ENCODE measurements at regions of chr3 and their contacts with region 1.

Region 1: GRCh38 chr3:154120961-154121700 is at the start of gene ARHGEF26:
- DNase-seq: peak; percentile 92 to 93
- H3K4me3 ChIP-seq: peak within 1 kb of the TSS; percentile 78
- H3K4me3 Mint-ChIP-seq: peak within 1 kb of the TSS; percentile 74
- H3K27ac Mint-ChIP-seq: peak within 1 kb of the TSS; percentile 95
- H3K4me1 ChIP-seq: peaks cover 24% of the 10 kb centered on the region
- H3K4me1 Mint-ChIP-seq: peaks cover 22% of the 10 kb centered on the region
- H3K27me3 ChIP-seq: no peaks in the 10 kb centered on the region
- H3K27me3 Mint-ChIP-seq: no peaks in the 10 kb centered on the region
- CTCF ChIP-seq: no peak
- total RNA-seq, gene ARHGEF26: 19.3 and 20.8 TPM in 2 replicates

Region 2: GRCh38 chr3:153599685-153600084 is 521.4 kb before region 1 on chr3:
- CTCF ChIA-PET with region 1: no interaction called
- POLR2A ChIA-PET with region 1: no interaction called
- intact Hi-C with region 1: no loop called
- DNase-seq: no peak
- H3K4me3 ChIP-seq: no peak overlapping the region
- H3K4me3 Mint-ChIP-seq: no peak overlapping the region
- H3K27ac Mint-ChIP-seq: no peak overlapping the region
- H3K4me1 ChIP-seq: no peaks in the 10 kb centered on the region
- H3K4me1 Mint-ChIP-seq: no peaks in the 10 kb centered on the region
- H3K27me3 ChIP-seq: no peaks in the 10 kb centered on the region
- H3K27me3 Mint-ChIP-seq: no peaks in the 10 kb centered on the region
- CTCF ChIP-seq: no peak

Region 3: DNA sequence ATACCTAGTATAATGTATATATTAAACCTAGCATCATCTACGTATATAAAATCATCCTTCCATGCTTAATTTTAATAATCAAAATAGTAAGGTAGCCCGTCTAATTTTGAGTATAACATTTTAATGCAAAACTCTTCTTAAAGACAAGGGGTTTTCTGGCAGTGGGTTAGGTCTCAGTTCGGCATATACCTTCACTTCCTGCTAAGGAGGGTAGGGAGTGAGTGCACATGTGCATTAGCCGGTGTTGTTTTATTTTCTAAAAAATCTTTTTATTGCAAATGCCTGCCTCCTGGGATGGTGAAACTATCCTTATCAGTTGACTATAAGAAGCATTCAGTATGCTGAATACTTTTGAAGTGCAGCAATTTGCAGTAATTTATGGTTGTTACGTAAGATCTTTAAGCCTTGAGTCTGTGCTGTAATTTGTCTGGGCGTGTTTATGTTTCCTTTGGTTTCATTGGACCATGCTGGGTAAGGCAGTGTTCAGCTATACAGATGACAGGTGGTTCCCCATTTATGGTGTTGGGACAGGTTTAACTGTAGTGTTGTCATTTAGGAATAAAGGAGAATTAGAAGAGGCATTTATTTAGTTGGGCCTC is 11.7 kb after region 1 on chr3:
- CTCF ChIA-PET with region 1: no interaction called
- POLR2A ChIA-PET with region 1: no interaction called
- intact Hi-C with region 1: loop called (anchors 1 kb)
- DNase-seq: peak; percentile 50 to 68
- H3K4me3 ChIP-seq: no peak overlapping the region
- H3K4me3 Mint-ChIP-seq: peak overlapping the region; percentile 12
- H3K27ac Mint-ChIP-seq: peak overlapping the region; percentile 10
- H3K4me1 ChIP-seq: peaks cover 29% of the 10 kb centered on the region
- H3K4me1 Mint-ChIP-seq: peaks cover 28% of the 10 kb centered on the region
- H3K27me3 ChIP-seq: no peaks in the 10 kb centered on the region
- H3K27me3 Mint-ChIP-seq: no peaks in the 10 kb centered on the region
- CTCF ChIP-seq: no peak

Region 4: GRCh38 chr3:154139996-154140436 is 18.9 kb after region 1 on chr3:
- CTCF ChIA-PET with region 1: interaction called, 4 read pairs
- POLR2A ChIA-PET with region 1: interaction called, 9 read pairs
- intact Hi-C with region 1: loop called (anchors 1 kb)
- DNase-seq: peak in 1 of 2 experiments; percentile 45
- H3K4me3 ChIP-seq: no peak overlapping the region
- H3K4me3 Mint-ChIP-seq: no peak overlapping the region
- H3K27ac Mint-ChIP-seq: no peak overlapping the region
- H3K4me1 ChIP-seq: peaks cover 33% of the 10 kb centered on the region
- H3K4me1 Mint-ChIP-seq: peaks cover 34% of the 10 kb centered on the region
- H3K27me3 ChIP-seq: no peaks in the 10 kb centered on the region
- H3K27me3 Mint-ChIP-seq: no peaks in the 10 kb centered on the region
- CTCF ChIP-seq: no peak